A549 (cell line): ENCODE measurements at regions of chr3 and their contacts with region 1.

Region 1: DNA sequence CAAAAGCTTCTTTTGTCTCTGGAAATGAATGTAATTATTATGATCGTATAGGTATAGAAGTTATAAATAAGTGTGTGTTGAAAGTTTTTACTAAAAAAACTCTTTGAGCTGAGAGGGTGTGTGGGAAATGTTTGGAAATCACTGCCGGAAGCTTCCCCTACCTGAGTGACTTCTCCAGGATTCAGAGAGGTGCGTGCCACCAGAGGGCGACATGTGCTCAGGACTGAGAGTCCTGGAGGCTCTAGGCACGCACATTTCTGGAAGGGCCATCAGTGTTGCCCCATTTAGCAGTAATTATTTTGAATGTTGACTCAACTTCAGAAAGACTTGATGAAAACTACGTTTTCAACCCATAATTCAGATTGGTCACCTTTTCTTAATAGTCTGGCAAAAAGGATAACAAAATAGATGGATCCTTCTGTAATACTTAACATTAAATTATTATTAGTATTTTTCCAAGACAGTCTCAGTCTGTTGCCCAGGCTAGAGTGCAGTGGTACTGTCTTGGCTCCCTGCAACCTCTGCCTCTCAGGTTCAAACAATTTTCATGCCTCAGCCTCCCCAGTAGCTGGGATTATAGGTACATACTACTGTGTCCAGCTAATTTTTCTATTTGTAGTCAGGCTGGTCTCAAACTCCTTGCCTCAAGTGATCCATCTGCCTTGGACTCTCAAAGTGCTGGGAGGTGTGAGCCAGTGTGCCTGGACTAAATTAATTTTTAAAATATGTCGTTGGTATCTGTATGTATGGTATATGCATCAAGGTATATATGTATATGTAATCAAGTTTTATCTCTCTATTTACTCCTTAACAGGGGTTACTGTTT is 34.5 kb downstream of the GPR171 start:
- DNase-seq: peak; percentile 59 to 64
- ATAC-seq: peak; percentile 96 to 99
- H3K4me3 ChIP-seq: no peak overlapping the region
- H3K27ac ChIP-seq: 0 out of 6 replicates have a peak overlapping the region, but pooled peaks of 1 of the 2 experiments have one; percentile 6
- H3K4me1 ChIP-seq: no peaks in the 10 kb centered on the region
- CTCF ChIP-seq: peak; percentile 90
- EP300 ChIP-seq: no peak
- POLR2A ChIP-seq: no peak
- RAD21 ChIP-seq: peak; percentile 91 to 92

Region 2: DNA sequence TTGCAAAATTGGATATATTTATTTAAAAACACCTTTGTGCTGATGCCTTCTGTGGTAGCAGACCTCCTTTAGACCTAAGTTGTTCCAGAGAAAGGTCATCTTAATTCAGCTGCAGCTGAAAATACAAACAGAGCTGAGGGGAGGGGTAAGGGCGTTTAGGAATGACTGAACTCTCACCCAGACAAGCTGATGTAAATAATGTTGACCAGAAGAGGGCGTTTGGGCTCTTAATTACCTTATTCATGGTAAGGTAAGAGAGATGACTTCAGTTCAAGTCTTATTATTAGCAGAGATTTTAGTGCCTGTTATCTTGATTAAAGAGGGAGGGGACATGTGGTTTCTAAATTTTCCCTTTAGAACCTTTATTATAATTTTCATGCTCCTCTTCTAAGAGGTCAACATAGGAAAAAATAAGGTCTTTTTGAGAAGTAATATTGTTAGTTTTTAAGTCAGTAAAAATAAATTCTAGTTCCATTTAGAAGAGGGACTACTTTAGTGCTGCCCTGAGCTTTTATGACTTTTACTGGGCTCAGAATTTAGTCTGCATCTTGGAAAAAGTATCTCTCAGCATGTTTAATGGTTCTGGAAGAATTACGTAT is 11.8 kb before region 1 on chr3:
- CTCF ChIA-PET with region 1: interaction called, 17 read pairs
- POLR2A ChIA-PET with region 1: no interaction called
- DNase-seq: peak; percentile 62 to 74
- ATAC-seq: peak; percentile 86 to 93
- H3K4me3 ChIP-seq: no peak overlapping the region
- H3K27ac ChIP-seq: no peak overlapping the region
- H3K4me1 ChIP-seq: no peaks in the 10 kb centered on the region
- CTCF ChIP-seq: peak; percentile 67
- EP300 ChIP-seq: no peak
- POLR2A ChIP-seq: no peak
- RAD21 ChIP-seq: peak; percentile 30 to 38; a peak in 3 of 5 replicates

Region 3: DNA sequence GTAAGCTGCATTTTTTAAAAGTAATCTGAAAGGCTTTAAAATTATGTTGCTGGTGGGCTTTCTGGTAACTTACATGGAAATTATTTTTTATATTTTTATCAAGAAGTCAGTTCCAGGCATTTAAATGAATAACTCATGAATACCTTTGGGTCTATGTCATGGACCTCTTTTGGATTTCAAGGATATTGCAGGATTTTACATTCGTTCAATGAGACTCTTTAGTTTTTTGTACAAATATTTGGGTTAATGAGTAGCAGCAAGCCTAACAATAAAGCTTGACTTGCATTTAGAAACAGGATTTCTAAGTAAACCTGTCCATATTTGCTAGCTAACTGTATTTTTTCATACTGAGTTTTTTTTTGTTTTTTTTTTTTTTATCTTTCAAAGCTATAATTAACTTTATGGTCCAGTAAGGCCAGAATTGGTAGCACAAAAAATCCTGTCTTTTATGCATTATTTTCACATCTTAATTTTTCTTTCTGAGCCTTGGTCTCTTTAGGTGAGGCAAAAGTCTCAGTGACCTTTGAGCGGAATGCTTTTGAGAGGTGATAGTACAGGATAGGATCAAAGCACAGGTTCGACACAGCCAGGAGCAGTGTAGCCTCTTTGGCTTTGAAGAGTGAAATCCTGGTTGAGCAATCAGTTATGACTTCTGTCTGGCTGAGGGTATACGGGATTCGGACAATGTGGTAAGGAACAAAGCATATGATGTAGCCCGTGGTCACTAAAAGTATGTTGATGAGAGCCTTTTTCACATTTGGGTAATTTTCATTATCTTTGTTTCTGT is 29.7 kb after region 1 on chr3:
- CTCF ChIA-PET with region 1: interaction called, 10 read pairs
- POLR2A ChIA-PET with region 1: no interaction called
- DNase-seq: no peak
- ATAC-seq: peak in 1 of 2 experiments; percentile 47; a peak in 1 of 6 replicates
- H3K4me3 ChIP-seq: no peak overlapping the region
- H3K27ac ChIP-seq: peak overlapping the region; percentile 39 to 55
- H3K4me1 ChIP-seq: peaks cover 18% of the 10 kb centered on the region; the same call in 2 of the 3 replicates
- CTCF ChIP-seq: no peak
- EP300 ChIP-seq: no peak
- POLR2A ChIP-seq: no peak
- RAD21 ChIP-seq: no peak

Region 4: GRCh38 chr3:151219056-151219455 is 50.6 kb after region 1 on chr3:
- CTCF ChIA-PET with region 1: interaction called, 36 read pairs
- POLR2A ChIA-PET with region 1: no interaction called
- DNase-seq: peak; percentile 10 to 25
- ATAC-seq: peak; percentile 62 to 70
- H3K4me3 ChIP-seq: no peak overlapping the region
- H3K27ac ChIP-seq: no peak overlapping the region
- H3K4me1 ChIP-seq: peaks cover 22% of the 10 kb centered on the region
- CTCF ChIP-seq: no peak
- EP300 ChIP-seq: no peak
- POLR2A ChIP-seq: no peak
- RAD21 ChIP-seq: no peak

Region 5: GRCh38 chr3:151236736-151237135 is 68.3 kb after region 1 on chr3:
- CTCF ChIA-PET with region 1: interaction called, 19 read pairs
- POLR2A ChIA-PET with region 1: no interaction called
- DNase-seq: no peak
- ATAC-seq: no peak
- H3K4me3 ChIP-seq: no peak overlapping the region
- H3K27ac ChIP-seq: no peak overlapping the region
- H3K4me1 ChIP-seq: no peaks in the 10 kb centered on the region
- CTCF ChIP-seq: no peak
- EP300 ChIP-seq: no peak
- POLR2A ChIP-seq: no peak
- RAD21 ChIP-seq: no peak

Region 6: GRCh38 chr3:151282921-151283320 is 114.4 kb after region 1 on chr3:
- CTCF ChIA-PET with region 1: interaction called, 161 read pairs
- POLR2A ChIA-PET with region 1: no interaction called
- DNase-seq: peak; percentile 60 to 63
- ATAC-seq: peak; percentile 63 to 85; a peak in 3 of 6 replicates
- H3K4me3 ChIP-seq: no peak overlapping the region
- H3K27ac ChIP-seq: no peak overlapping the region
- H3K4me1 ChIP-seq: peaks cover 11% of the 10 kb centered on the region; the same call in 2 of the 3 replicates
- CTCF ChIP-seq: peak; percentile 85
- EP300 ChIP-seq: no peak
- POLR2A ChIP-seq: no peak
- RAD21 ChIP-seq: peak; percentile 88 to 89

Region 7: GRCh38 chr3:151864423-151865101 is 696.1 kb after region 1 on chr3:
- CTCF ChIA-PET with region 1: no interaction called
- POLR2A ChIA-PET with region 1: no interaction called
- DNase-seq: peak in 1 of 2 experiments; percentile 45
- ATAC-seq: peak in 1 of 2 experiments; percentile 60; a peak in 3 of 6 replicates
- H3K4me3 ChIP-seq: no peak overlapping the region
- H3K27ac ChIP-seq: peak overlapping the region; percentile 46 to 75
- H3K4me1 ChIP-seq: peaks cover 52% of the 10 kb centered on the region
- CTCF ChIP-seq: no peak
- EP300 ChIP-seq: peak in 1 of 2 experiments; percentile 28; a peak in 1 of 5 replicates
- POLR2A ChIP-seq: no peak
- RAD21 ChIP-seq: no peak

Region 8: DNA sequence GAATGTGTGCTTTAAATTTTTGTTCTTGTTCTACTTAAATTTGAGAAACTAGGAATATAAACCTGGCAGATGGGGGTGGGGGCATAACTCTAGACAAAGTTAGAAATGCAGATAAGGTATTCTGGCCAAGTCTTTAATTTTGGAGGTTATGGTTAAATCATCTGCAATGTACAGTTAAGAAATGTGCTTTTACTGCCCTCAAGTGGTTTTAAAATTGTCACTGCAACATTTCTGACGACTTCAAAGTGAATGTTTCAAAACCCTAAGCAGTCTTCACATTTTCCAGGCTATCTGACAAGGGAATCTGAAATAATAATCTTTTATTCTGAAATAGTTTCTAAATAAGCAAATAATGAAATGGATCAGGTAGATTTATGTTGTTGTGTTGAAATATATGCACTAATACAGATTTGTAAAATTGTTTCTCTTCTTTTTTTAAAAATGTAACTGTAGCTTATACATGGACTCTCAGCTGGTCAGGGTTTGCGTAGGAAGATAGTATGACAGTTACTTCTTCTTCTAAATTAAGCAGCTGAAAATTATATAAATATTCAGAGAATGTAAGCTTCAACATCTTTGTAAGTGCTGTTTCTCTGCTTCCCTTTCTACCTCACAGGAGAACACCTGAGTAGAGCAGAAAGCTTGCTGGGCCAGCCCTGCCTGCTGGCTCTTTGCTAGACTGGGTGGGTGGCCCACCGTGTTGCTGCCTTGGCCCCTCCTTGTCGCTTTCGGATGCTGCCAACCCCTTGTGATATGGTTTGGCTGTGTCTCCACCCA is 750.0 kb after region 1 on chr3:
- CTCF ChIA-PET with region 1: interaction called, 14 read pairs
- POLR2A ChIA-PET with region 1: no interaction called
- DNase-seq: peak; percentile 34 to 75
- ATAC-seq: peak; percentile 77 to 86
- H3K4me3 ChIP-seq: no peak overlapping the region
- H3K27ac ChIP-seq: peak overlapping the region; percentile 50 to 70; a peak in 5 of 6 replicates
- H3K4me1 ChIP-seq: peaks cover 11% of the 10 kb centered on the region; the same call in 2 of the 3 replicates
- CTCF ChIP-seq: peak; percentile 88
- EP300 ChIP-seq: no peak
- POLR2A ChIP-seq: no peak
- RAD21 ChIP-seq: peak; percentile 82 to 95

Region 9: DNA sequence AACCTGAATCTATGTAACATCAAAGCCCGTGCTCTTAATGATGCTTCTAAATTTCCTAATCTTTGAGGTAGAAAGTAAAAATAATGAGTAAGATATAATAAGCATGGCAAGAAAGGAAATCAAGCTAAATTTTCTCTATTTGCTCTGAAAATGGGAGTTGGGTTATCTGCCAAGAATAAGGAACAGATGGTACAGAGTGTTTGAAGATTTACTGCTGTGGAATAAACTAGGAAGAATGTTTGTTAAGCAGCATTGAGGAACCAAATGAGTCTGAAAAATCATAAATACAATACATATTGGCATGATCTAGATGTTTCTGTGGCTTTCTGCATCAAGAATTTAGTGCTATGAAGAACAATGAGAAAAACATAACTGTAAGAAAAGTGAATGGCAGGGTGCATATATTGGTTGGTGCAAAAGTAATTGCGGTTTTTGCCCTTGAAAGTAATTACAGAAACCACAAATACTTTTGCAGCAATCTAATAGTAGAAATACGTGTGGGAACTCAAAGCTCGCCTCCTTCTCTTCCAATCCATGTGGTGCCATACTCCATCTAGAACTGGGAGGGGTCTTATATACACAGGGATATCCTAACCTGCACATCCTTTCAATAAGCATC is 792.6 kb after region 1 on chr3:
- CTCF ChIA-PET with region 1: no interaction called
- POLR2A ChIA-PET with region 1: no interaction called
- DNase-seq: no peak
- ATAC-seq: no peak
- H3K4me3 ChIP-seq: no peak overlapping the region
- H3K27ac ChIP-seq: no peak overlapping the region
- H3K4me1 ChIP-seq: no peaks in the 10 kb centered on the region
- CTCF ChIP-seq: no peak
- EP300 ChIP-seq: no peak
- POLR2A ChIP-seq: no peak
- RAD21 ChIP-seq: no peak